Activated CD8-positive, alpha-beta T cell treated with anti-CD3 and anti-CD28 coated beads for 36 hours (primary cell): ENCODE measurements at regions of chr19 and their contacts with region 1.

Region 1: DNA sequence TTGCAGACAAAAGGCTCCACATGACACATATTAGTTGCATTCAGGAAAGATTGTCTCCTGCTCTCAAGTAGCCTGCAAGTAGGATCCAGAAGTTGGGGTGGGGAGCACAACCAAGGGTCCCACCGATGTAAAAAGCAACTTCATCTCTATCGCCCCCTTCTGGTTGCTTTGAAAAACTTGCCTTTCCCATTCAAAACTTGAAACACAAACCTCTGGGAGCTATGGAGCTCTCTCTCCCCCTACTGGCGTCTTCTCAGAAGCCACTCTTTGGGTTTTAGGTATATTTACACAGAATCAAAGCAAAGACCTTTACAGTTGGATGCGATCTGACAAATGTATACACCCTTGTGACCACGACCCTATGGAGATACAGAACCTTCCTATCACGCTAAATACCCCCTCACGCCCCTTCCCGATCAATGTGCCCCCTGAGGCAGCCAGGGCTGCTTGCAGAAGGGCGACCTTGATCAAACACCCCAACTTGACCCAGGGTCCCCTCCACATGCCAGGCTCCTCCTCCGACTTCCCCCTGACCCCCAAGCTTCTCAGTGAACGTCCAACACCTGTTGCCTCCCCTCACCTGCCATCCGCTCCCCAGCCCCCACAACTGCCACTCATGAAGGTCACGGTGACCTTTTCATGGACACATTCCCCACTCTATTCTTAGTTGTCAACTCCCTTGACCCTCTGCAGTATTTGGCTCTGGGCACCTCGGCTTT is 10.1 kb downstream of the NOSIP start:
- DNase-seq: peak; percentile 88
- ATAC-seq: peak; percentile 66
- H3K4me3 Mint-ChIP-seq: no peak overlapping the region
- H3K27ac Mint-ChIP-seq: peak overlapping the region; percentile 67
- H3K4me1 Mint-ChIP-seq: peaks cover 43% of the 10 kb centered on the region
- H3K27me3 Mint-ChIP-seq: no peaks in the 10 kb centered on the region
- CTCF ChIP-seq: peak; percentile 100

Region 2: GRCh38 chr19:49473868-49474544 is 96.3 kb before region 1 on chr19 and contains the start of gene FLT3LG:
- CTCF ChIA-PET with region 1: interaction called, 12 read pairs
- POLR2A ChIA-PET with region 1: no interaction called
- intact Hi-C with region 1: no loop called
- DNase-seq: peak; percentile 93
- ATAC-seq: peak; percentile 60
- H3K4me3 Mint-ChIP-seq: peak within 1 kb of the TSS; percentile 89
- H3K27ac Mint-ChIP-seq: peak within 1 kb of the TSS; percentile 92
- H3K4me1 Mint-ChIP-seq: peaks cover 45% of the 10 kb centered on the region
- H3K27me3 Mint-ChIP-seq: no peaks in the 10 kb centered on the region
- CTCF ChIP-seq: peak; percentile 94
- total RNA-seq, gene FLT3LG: 57.7 to 61.2 TPM

Region 3: DNA sequence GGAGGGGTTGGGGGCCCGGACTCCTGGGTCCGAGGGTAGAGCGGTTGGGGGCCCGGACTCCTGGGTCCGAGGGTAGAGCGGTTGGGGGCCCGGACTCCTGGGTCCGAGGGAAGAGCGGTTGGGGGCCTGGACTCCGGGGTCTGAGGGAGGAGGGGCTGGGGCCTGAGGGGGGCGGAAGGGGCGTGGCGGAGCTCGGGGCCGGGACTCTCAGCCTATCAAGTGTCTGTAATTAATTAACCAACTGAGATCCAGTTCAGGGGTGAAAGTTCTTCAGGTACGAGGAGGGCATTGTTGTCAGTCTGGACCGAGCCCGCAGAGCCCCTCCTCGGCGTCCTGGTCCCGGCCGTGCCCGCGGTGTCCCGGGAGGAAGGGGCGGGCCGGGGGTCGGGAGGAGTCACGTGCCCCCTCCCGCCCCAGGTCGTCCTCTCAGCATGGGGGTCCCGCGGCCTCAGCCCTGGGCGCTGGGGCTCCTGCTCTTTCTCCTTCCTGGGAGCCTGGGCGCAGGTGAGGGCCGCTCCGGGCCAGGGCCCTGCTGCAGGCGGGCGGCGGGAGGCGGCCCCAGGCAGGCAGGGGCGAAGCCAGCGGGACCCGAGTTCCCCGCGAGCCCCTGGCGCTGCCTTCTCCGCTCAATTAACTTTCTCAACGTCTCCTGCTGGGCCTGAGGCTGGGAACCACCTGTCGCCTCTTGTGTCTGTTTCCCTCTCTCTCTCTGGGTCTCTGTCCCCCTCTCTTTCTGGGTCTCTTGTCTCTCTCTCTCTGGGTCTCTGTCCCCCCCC is 57.1 kb before region 1 on chr19:
- CTCF ChIA-PET with region 1: interaction called, 185 read pairs
- POLR2A ChIA-PET with region 1: interaction called, 4 read pairs
- intact Hi-C with region 1: no loop called
- DNase-seq: peak; percentile 58
- ATAC-seq: peak; percentile 75
- H3K4me3 Mint-ChIP-seq: peak overlapping the region; percentile 76
- H3K27ac Mint-ChIP-seq: peak overlapping the region; percentile 79
- H3K4me1 Mint-ChIP-seq: peaks cover 19% of the 10 kb centered on the region
- H3K27me3 Mint-ChIP-seq: no peaks in the 10 kb centered on the region
- CTCF ChIP-seq: no peak

Region 4: DNA sequence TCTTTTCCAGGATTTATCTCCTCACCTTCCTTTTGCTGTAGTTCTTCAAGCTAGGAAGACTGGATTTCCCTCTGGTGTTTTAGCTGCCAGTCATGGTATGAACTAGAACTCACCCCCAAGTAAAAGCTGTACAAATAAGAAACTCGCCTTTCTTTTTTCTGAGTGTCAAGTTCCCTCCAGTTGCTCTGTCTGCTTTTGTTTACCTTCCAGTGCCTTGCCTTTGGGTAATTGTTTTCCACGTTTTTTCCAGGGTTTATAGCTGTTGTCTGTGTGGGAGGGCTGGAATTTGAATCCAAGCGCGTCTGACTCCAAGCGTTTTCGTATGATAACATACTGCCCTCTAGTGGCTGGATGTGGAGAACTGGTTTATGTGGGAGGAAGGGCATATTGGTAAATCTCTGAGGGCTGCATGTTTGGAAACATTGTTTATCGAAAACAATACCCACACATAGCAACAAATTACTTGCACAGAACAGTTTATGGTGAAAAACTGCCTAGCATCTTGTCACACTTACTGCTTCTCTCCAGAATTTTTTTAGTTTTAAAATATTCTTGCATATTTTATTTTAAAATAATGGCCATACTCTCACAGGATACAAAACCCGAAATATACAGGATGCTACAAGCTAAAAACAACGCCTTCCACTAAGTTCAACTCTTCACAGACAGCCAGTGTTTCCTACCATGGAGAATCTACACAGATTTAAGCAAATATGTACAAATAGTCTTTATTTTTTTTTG is 23.3 kb before region 1 on chr19:
- CTCF ChIA-PET with region 1: interaction called, 84 read pairs
- POLR2A ChIA-PET with region 1: interaction called, 3 read pairs
- intact Hi-C with region 1: no loop called
- DNase-seq: peak; percentile 78
- ATAC-seq: peak; percentile 63
- H3K4me3 Mint-ChIP-seq: peak overlapping the region; percentile 64
- H3K27ac Mint-ChIP-seq: peak overlapping the region; percentile 54
- H3K4me1 Mint-ChIP-seq: peaks cover 28% of the 10 kb centered on the region
- H3K27me3 Mint-ChIP-seq: no peaks in the 10 kb centered on the region
- CTCF ChIP-seq: peak; percentile 93

Region 5: DNA sequence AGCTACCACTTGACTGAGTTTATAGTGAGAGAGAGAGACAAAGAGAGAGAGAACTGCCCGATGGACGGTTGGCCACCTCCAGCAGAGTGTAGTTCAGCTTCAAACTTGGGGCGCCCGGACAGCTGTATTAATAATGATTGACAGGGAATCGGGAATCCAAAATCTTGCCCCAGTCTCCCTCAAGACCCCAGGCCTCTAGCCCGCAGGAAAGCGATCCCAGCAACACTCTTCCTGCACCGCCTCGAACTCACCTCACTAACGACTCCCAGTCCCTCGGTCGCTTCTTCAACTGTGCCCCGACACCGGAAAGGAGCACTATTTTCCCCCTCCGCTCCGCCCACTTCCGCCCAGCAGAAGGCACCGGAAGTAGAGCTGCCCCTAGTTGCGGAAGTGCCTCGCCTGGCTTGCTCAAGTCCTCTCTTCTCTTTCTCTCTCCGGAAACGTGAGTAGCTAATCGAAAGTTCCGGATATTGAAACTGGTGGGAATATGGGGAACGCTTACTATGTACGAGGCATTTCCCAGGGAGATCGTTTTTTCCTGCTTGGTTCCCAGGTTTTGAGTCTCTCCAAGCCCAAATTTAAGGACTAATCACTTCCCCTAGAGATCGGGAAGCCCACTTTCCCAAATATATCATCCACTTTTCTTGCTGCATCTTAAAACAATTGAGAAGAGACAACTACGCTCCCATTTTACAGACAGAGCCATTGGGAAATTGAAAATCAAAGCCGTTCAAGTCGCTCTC is 10.1 kb after region 1 on chr19 and contains the start of gene NOSIP:
- CTCF ChIA-PET with region 1: interaction called, 32 read pairs
- POLR2A ChIA-PET with region 1: interaction called, 47 read pairs
- intact Hi-C with region 1: no loop called
- DNase-seq: peak; percentile 97
- ATAC-seq: peak; percentile 98
- H3K4me3 Mint-ChIP-seq: peak within 1 kb of the TSS; percentile 95
- H3K27ac Mint-ChIP-seq: peak within 1 kb of the TSS; percentile 90
- H3K4me1 Mint-ChIP-seq: peaks cover 32% of the 10 kb centered on the region
- H3K27me3 Mint-ChIP-seq: no peaks in the 10 kb centered on the region
- CTCF ChIP-seq: no peak
- total RNA-seq, gene NOSIP: 75.6 to 79.4 TPM

Region 6: DNA sequence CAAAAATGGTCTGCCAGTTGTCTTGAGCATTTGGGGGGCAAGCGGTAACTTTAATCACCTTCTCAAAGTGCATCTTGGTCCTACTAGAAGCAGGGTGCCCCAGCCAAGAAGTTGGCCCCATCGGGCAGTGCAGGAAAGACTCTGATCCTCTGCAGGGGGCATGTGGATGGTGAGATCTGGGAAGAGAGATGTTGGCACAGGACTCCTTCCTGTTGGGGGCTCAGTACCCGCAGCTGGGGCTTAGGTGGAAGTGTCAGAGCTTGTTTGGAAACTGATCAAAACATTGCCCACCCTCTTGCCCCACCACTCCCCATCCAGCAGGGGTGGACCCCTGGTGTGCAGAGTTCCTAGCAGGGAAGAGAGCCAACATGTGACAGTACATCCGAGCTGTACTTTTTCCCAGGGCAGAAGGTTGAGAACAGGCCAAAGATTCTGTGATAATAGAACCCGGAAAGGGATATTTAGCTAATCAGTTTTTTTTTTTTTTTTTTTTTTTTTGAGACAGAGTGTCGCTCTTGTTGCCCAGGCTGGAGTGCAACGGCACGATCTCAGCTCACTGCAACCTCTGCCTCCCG is 60.8 kb after region 1 on chr19:
- CTCF ChIA-PET with region 1: no interaction called
- POLR2A ChIA-PET with region 1: no interaction called
- intact Hi-C with region 1: no loop called
- DNase-seq: no peak
- ATAC-seq: no peak
- H3K4me3 Mint-ChIP-seq: no peak overlapping the region
- H3K27ac Mint-ChIP-seq: no peak overlapping the region
- H3K4me1 Mint-ChIP-seq: no peaks in the 10 kb centered on the region
- H3K27me3 Mint-ChIP-seq: no peaks in the 10 kb centered on the region
- CTCF ChIP-seq: no peak

Region 7: DNA sequence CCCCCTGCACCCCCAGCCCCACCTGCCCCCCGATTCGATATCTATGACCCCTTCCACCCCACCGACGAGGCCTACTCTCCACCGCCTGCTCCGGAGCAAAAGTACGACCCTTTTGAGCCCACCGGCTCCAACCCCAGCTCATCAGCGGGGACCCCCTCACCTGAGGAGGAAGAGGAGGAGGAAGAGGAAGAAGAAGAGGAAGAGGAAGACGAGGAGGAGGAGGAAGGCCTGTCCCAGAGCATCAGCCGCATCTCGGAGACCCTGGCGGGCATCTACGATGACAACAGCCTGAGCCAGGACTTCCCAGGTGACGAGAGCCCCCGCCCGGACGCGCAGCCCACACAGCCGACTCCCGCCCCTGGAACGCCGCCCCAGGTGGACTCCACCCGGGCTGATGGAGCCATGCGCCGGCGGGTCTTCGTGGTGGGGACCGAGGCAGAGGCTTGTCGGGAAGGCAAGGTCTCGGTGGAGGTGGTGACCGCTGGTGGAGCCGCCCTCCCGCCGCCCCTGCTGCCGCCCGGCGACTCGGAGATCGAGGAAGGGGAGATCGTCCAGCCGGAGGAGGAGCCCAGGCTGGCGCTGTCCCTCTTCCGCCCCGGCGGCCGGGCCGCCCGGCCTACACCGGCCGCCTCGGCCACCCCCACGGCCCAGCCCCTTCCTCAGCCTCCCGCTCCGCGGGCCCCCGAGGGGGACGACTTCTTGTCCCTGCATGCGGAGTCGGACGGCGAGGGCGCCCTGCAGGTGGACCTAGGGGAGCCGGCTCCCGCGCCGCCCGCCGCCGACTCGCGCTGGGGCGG is 80.9 kb after region 1 on chr19:
- CTCF ChIA-PET with region 1: no interaction called
- POLR2A ChIA-PET with region 1: no interaction called
- intact Hi-C with region 1: no loop called
- DNase-seq: no peak
- ATAC-seq: no peak
- H3K4me3 Mint-ChIP-seq: no peak overlapping the region
- H3K27ac Mint-ChIP-seq: no peak overlapping the region
- H3K4me1 Mint-ChIP-seq: no peaks in the 10 kb centered on the region
- H3K27me3 Mint-ChIP-seq: no peaks in the 10 kb centered on the region
- CTCF ChIP-seq: no peak